ENCODE measurements at regions of chr17 and their contacts with region 1.

Region 1: GRCh38 chr17:76501018-76501826 is at the start of gene RHBDF2:
- DNase-seq: peak; percentile 81 to 99 (median 94)
- ATAC-seq: peak; percentile 92 to 99 (median 93)
- H3K4me3 ChIP-seq: peak within 1 kb of the TSS; percentile 69 to 79
- H3K4me3 Mint-ChIP-seq: peak within 1 kb of the TSS; percentile 82 to 90 (median 83)
- H3K27ac ChIP-seq: peak within 1 kb of the TSS; percentile 79
- H3K27ac Mint-ChIP-seq: peak within 1 kb of the TSS; percentile 98
- H3K4me1 ChIP-seq: peaks cover 3 to 56% of the 10 kb centered on the region in 2 experiments
- H3K4me1 Mint-ChIP-seq: peaks cover 40 to 60% (median 48%) of the 10 kb centered on the region in 3 donors
- H3K27me3 ChIP-seq: peaks cover 0 to 6% of the 10 kb centered on the region in 2 experiments
- H3K27me3 Mint-ChIP-seq: no peaks in the 10 kb centered on the region
- total RNA-seq, gene RHBDF2: 35.2 to 99.0 (median 74.0) TPM

Region 2: GRCh38 chr17:75872434-75873351 is 628.5 kb before region 1 on chr17:
- CTCF ChIA-PET with region 1: no interaction called
- POLR2A ChIA-PET with region 1: interaction called in 1 of 2 experiments, 11 read pairs
- DNase-seq: peak in 34 of 35 experiments; percentile 34 to 76 (median 60)
- ATAC-seq: peak; percentile 49 to 62 (median 61)
- H3K4me3 ChIP-seq: no peak overlapping the region
- H3K4me3 Mint-ChIP-seq: peak overlapping the region in 2 of 3 donors; percentile 24 to 47
- H3K27ac ChIP-seq: peak overlapping the region; percentile 89
- H3K27ac Mint-ChIP-seq: peak overlapping the region; percentile 96
- H3K4me1 ChIP-seq: peaks cover 22 to 50% of the 10 kb centered on the region in 2 experiments
- H3K4me1 Mint-ChIP-seq: peaks cover 32 to 48% (median 43%) of the 10 kb centered on the region in 3 donors
- H3K27me3 ChIP-seq: peaks cover 0 to 10% of the 10 kb centered on the region in 2 experiments
- H3K27me3 Mint-ChIP-seq: no peaks in the 10 kb centered on the region

Region 3: DNA sequence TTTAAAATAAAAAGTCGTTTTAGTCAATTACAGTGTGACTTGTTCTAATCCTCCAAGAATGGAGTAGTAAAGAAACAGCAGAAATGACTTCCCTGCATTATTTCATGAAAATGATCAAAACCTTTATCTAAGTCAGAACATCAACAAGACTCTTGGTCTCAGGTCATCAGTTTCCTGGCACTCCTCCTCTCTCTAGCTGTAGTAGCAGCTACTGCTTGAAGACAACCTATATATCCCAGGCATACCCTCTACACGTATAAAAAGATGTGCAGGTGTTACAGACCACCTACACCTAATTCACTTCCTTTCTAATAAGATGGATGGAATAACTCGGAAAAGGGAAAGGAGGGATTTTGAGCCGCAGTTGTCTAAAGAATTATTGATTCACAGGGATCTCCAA is 558.7 kb before region 1 on chr17:
- CTCF ChIA-PET with region 1: interaction called in 1 of 2 experiments, 10 read pairs
- POLR2A ChIA-PET with region 1: no interaction called
- DNase-seq: no peak
- ATAC-seq: no peak
- H3K4me3 ChIP-seq: no peak overlapping the region
- H3K4me3 Mint-ChIP-seq: no peak overlapping the region
- H3K27ac ChIP-seq: no peak overlapping the region
- H3K27ac Mint-ChIP-seq: no peak overlapping the region
- H3K4me1 ChIP-seq: peaks cover 0 to 16% of the 10 kb centered on the region in 2 experiments
- H3K4me1 Mint-ChIP-seq: peaks cover 9 to 19% (median 14%) of the 10 kb centered on the region in 3 donors
- H3K27me3 ChIP-seq: no peaks in the 10 kb centered on the region
- H3K27me3 Mint-ChIP-seq: no peaks in the 10 kb centered on the region

Region 4: GRCh38 chr17:76458580-76459490 is 42.4 kb before region 1 on chr17:
- CTCF ChIA-PET with region 1: interaction called, 3 to 4 read pairs
- POLR2A ChIA-PET with region 1: interaction called, 8 to 14 read pairs
- DNase-seq: no peak
- ATAC-seq: peak in 1 of 4 experiments; percentile 28
- H3K4me3 ChIP-seq: no peak overlapping the region
- H3K4me3 Mint-ChIP-seq: no peak overlapping the region
- H3K27ac ChIP-seq: no peak overlapping the region
- H3K27ac Mint-ChIP-seq: no peak overlapping the region
- H3K4me1 ChIP-seq: no peaks in the 10 kb centered on the region
- H3K4me1 Mint-ChIP-seq: no peaks in the 10 kb centered on the region
- H3K27me3 ChIP-seq: peaks cover 0 to 4% of the 10 kb centered on the region in 2 experiments
- H3K27me3 Mint-ChIP-seq: no peaks in the 10 kb centered on the region

Measured in T-cell (primary cell).